ENCODE measurements at regions of chr16 and their contacts with region 1.

Region 1: GRCh38 chr16:57734925-57735754 is 430 bp upstream of the KATNB1 start:
- DNase-seq: peak; percentile 95 to 99
- ATAC-seq: peak; percentile 88 to 97 (median 88)
- H3K4me3 ChIP-seq: peak overlapping the region; percentile 70
- H3K4me3 Mint-ChIP-seq: peak overlapping the region; percentile 95
- H3K27ac ChIP-seq: peak overlapping the region; percentile 67
- H3K27ac Mint-ChIP-seq: peak overlapping the region; percentile 96
- H3K4me1 ChIP-seq: peaks cover 24% of the 10 kb centered on the region
- H3K4me1 Mint-ChIP-seq: peaks cover 34 to 37% of the 10 kb centered on the region in 2 donors
- H3K27me3 ChIP-seq: no peaks in the 10 kb centered on the region
- H3K27me3 Mint-ChIP-seq: no peaks in the 10 kb centered on the region
- CTCF ChIP-seq: no peak

Region 2: DNA sequence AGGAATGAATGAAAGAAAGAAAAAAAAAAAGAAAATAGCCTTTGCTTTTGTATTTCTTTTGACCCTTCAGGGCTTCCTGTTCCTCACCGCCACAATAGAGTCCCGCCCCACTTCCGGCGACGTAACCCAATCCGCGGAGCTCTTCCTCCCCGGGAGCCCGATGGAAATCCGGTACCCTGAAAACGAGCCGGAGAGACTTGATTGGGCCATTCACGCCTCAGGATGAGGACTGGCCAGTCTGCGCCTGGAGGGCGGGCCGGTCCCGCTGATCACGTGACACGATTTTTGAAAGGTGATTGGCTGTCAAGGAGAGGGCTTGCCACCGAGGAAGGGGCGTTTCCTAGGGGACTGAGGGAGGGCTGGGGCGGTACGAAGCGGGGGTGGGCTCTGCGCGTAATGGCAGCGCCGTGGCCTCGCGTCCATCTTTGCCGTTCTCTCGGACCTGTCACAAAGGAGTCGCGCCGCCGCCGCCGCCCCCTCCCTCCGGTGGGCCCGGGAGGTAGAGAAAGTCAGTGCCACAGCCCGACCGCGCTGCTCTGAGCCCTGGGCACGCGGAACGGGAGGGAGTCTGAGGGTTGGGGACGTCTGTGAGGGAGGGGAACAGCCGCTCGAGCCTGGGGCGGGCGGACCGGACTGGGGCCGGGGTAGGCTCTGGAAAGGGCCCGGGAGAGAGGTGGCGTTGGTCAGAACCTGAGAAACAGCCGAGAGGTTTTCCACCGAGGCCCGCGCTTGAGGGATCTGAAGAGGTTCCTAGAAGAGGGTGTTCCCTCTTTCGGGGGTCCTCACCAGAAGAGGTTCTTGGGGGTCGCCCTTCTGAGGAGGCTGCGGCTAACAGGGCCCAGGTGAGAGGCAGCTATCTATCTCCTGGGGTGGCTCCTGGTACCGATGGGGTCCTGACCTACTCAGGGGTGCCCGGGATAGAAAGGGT is 548.9 kb before region 1 on chr16 and contains the starts of genes PSME3IP1 and RSPRY1:
- intact Hi-C with region 1: loop called (anchors 5 kb)
- DNase-seq: peak; percentile 95 to 100
- ATAC-seq: peak; percentile 88 to 95 (median 93)
- H3K4me3 ChIP-seq: peak within 1 kb of the TSS; percentile 98
- H3K4me3 Mint-ChIP-seq: peak within 1 kb of the TSS; percentile 100
- H3K27ac ChIP-seq: peak within 1 kb of the TSS; percentile 96
- H3K27ac Mint-ChIP-seq: peak within 1 kb of the TSS; percentile 98 to 99
- H3K4me1 ChIP-seq: peaks cover 21% of the 10 kb centered on the region
- H3K4me1 Mint-ChIP-seq: peaks cover 49 to 50% of the 10 kb centered on the region in 2 donors
- H3K27me3 ChIP-seq: no peaks in the 10 kb centered on the region
- H3K27me3 Mint-ChIP-seq: no peaks in the 10 kb centered on the region
- CTCF ChIP-seq: no peak
- total RNA-seq, gene PSME3IP1: 129 to 148 (median 133) TPM
- total RNA-seq, gene RSPRY1: 22.6 to 26.6 (median 23.4) TPM

Region 3: DNA sequence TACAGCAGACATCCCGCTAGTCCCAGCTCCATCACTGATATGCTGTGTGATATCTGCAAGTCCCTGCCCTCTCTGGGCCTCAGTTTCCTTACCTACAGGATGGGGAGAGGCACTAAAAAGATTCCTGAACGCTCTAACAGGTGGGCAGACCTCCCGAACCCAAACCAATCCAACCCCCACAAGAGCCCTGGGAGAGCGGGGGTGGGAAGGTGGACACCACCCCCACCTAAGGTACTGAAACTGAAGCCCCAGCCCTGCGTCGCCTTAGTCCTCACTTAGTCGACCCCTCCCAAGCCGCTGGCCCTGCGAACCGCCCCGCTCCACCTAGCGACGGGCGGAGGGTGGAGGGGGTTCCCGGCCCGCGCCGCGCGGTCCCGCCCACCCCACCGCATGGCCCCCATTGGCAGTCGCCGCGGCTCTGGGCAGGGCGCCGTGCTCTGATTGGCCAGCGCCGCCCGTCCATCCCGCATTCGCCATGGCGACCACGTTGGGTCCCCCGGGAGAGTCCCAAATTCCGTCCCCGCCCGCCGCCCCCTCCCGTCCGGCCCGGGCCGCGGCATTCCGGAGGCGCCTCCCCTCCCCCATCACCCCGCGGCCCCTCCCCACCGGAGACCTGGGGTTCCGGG is 199.3 kb before region 1 on chr16:
- intact Hi-C with region 1: loop called (anchors 5 kb)
- DNase-seq: peak; percentile 92 to 97
- ATAC-seq: peak; percentile 84 to 93 (median 89)
- H3K4me3 ChIP-seq: peak overlapping the region; percentile 45
- H3K4me3 Mint-ChIP-seq: peak overlapping the region; percentile 86
- H3K27ac ChIP-seq: peak overlapping the region; percentile 95
- H3K27ac Mint-ChIP-seq: peak overlapping the region; percentile 99
- H3K4me1 ChIP-seq: peaks cover 87% of the 10 kb centered on the region
- H3K4me1 Mint-ChIP-seq: peaks cover 68 to 82% of the 10 kb centered on the region in 2 donors
- H3K27me3 ChIP-seq: no peaks in the 10 kb centered on the region
- H3K27me3 Mint-ChIP-seq: no peaks in the 10 kb centered on the region
- CTCF ChIP-seq: no peak

Region 4: GRCh38 chr16:57591086-57591869 is 143.9 kb before region 1 on chr16:
- intact Hi-C with region 1: loop called (anchors 5 kb)
- DNase-seq: peak; percentile 69 to 83
- ATAC-seq: peak; percentile 61 to 79 (median 63)
- H3K4me3 ChIP-seq: peak overlapping the region; percentile 19
- H3K4me3 Mint-ChIP-seq: peak overlapping the region; percentile 82
- H3K27ac ChIP-seq: peak overlapping the region; percentile 89
- H3K27ac Mint-ChIP-seq: peak overlapping the region; percentile 94 to 97
- H3K4me1 ChIP-seq: peaks cover 81% of the 10 kb centered on the region
- H3K4me1 Mint-ChIP-seq: peaks cover 80 to 87% of the 10 kb centered on the region in 2 donors
- H3K27me3 ChIP-seq: no peaks in the 10 kb centered on the region
- H3K27me3 Mint-ChIP-seq: no peaks in the 10 kb centered on the region
- CTCF ChIP-seq: peak; percentile 81

Region 5: DNA sequence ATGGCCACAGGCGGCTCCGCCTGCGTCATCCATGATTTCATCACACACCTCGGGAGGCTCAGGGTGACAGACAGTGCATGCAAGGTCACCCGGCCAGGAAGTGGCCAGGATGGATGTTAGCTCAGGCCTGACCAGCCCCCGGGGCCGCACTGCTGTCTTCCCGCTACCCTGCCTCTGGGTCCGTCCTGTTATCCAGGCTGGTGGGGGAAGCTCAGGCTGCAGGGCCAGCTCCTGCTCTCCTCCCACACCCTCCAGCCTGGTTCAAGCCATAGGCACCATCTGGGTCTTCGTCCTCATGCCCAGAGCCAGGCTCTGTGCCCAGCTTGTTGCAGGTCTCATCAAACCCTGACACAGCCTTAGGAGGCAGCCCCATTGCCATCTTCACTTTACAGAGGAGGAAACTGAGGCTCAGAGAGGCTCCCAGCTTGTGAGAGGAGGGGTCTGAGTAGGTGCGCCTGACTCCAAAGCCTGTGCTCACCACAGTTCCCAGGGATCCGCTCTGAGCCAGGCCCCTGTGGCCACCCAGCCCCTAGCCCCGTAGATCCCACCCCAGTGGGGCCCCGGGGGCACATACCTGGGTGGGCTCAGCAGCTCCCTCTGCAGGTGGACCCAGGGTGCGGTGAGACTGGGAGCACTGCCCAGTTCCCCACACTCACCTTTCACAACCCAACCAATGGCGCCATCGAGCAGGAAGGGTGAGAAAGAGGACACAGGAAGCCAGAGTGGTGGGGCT is 67.4 kb before region 1 on chr16:
- intact Hi-C with region 1: loop called (anchors 2 kb)
- DNase-seq: peak; percentile 52 to 77
- ATAC-seq: peak; percentile 76 to 92 (median 82)
- H3K4me3 ChIP-seq: no peak overlapping the region
- H3K4me3 Mint-ChIP-seq: peak overlapping the region; percentile 53
- H3K27ac ChIP-seq: peak overlapping the region; percentile 90
- H3K27ac Mint-ChIP-seq: peak overlapping the region; percentile 97 to 98
- H3K4me1 ChIP-seq: peaks cover 53% of the 10 kb centered on the region
- H3K4me1 Mint-ChIP-seq: peaks cover 38 to 54% of the 10 kb centered on the region in 2 donors
- H3K27me3 ChIP-seq: no peaks in the 10 kb centered on the region
- H3K27me3 Mint-ChIP-seq: no peaks in the 10 kb centered on the region
- CTCF ChIP-seq: no peak

Region 6: DNA sequence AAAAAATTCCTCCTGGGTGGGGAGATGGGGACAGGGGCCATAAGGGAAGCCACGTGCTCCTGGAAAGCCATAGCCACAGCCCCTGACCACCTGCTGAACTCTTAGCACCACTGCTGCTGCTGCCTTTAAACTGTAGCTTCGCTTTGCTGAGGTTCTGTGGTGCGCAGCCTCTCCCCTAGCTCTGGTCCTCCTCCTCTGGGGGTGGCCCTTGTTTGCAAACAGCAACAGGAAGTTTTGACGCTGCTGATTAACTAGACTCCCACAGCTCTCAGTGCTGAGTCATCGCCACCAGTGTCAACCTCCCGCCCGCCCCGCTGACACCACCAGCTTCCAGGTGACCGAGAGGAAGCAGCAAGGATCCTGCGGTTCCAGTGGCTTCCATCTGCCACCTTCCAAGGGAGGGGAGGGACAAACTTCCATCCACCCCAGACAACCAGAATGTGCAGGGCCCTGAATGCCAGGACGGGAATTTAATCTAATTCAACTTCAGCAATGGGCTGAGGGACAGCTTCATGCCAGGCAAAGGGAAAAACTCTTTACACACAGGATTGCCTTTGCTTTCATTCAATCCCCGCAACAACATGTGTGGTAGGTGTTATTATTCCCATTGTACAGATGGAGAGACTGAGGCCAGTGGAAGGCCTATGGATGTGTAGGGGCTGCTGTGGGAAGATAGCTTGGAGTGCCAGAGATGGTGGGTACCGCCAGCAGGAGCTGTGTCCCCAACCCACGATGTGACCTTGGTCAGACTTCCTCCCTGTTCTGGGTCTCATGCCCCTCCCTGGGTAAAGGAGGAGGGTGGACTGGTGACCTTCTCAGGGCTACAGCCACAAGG is 75.3 kb after region 1 on chr16:
- intact Hi-C with region 1: loop called (anchors 5 kb)
- DNase-seq: peak; percentile 82 to 89
- ATAC-seq: peak; percentile 93 to 99 (median 98)
- H3K4me3 ChIP-seq: no peak overlapping the region
- H3K4me3 Mint-ChIP-seq: peak overlapping the region; percentile 69
- H3K27ac ChIP-seq: peak overlapping the region; percentile 52
- H3K27ac Mint-ChIP-seq: peak overlapping the region; percentile 95 to 96
- H3K4me1 ChIP-seq: peaks cover 46% of the 10 kb centered on the region
- H3K4me1 Mint-ChIP-seq: peaks cover 49 to 50% of the 10 kb centered on the region in 2 donors
- H3K27me3 ChIP-seq: no peaks in the 10 kb centered on the region
- H3K27me3 Mint-ChIP-seq: no peaks in the 10 kb centered on the region
- CTCF ChIP-seq: no peak

Region 7: DNA sequence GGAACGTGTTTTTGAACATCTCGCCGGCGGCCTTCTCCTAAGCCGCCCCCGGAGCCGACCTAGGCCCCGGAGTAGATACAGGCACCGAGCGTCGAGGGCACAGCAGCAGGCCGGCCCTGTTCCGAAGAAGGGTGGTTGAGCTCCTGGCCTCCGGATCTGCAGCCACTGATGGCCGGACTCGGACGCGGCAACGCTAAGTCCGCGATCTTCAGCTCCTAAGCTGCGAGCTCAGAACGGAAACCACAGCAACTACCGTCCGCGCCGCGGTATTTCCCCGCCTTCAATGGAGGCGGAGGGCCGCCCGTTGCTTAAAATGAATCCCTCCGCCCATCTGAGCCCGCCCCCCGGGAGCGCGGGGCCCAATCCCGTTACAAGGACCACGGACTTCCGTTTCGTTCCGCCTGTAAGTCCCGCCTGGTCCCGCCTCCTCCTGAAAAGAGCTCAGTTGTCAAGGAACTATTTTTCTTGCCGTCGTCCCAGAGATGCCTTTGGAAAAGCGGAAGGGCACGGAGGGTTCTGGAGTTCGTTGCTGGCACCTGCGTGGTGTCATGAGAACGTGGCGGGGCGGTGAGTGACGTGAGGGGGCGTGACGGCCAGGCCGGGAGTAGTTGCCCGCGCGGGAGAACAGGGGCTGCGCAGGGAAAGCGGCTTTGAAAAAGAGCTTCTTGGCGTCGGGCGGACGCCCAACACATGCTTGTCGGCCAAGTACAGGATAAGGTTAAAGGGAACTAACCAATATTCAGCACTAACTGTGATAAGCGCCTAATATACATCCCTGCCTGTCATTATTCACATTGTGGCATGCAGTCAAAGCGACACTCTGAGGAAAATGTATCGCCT is 394.2 kb after region 1 on chr16 and contains the start of gene CFAP20:
- intact Hi-C with region 1: loop called (anchors 5 kb)
- DNase-seq: peak; percentile 94 to 98
- ATAC-seq: peak; percentile 86 to 95 (median 94)
- H3K4me3 ChIP-seq: peak within 1 kb of the TSS; percentile 94
- H3K4me3 Mint-ChIP-seq: peak within 1 kb of the TSS; percentile 99
- H3K27ac ChIP-seq: peak within 1 kb of the TSS; percentile 88
- H3K27ac Mint-ChIP-seq: peak within 1 kb of the TSS; percentile 93 to 95
- H3K4me1 ChIP-seq: peaks cover 25% of the 10 kb centered on the region
- H3K4me1 Mint-ChIP-seq: peaks cover 42% of the 10 kb centered on the region in 2 donors
- H3K27me3 ChIP-seq: no peaks in the 10 kb centered on the region
- H3K27me3 Mint-ChIP-seq: no peaks in the 10 kb centered on the region
- CTCF ChIP-seq: no peak
- total RNA-seq, gene CFAP20: 57.9 to 137 (median 64.7) TPM